ENCODE measurements at regions of chr7 and their contacts with region 1.

Region 1: GRCh38 chr7:81659697-81660395 is 110.0 kb downstream of the HGF start:
- DNase-seq: no peak
- ATAC-seq: no peak
- H3K4me3 Mint-ChIP-seq: no peak overlapping the region
- H3K27ac Mint-ChIP-seq: no peak overlapping the region
- H3K4me1 Mint-ChIP-seq: no peaks in the 10 kb centered on the region
- H3K27me3 Mint-ChIP-seq: no peaks in the 10 kb centered on the region

Region 2: DNA sequence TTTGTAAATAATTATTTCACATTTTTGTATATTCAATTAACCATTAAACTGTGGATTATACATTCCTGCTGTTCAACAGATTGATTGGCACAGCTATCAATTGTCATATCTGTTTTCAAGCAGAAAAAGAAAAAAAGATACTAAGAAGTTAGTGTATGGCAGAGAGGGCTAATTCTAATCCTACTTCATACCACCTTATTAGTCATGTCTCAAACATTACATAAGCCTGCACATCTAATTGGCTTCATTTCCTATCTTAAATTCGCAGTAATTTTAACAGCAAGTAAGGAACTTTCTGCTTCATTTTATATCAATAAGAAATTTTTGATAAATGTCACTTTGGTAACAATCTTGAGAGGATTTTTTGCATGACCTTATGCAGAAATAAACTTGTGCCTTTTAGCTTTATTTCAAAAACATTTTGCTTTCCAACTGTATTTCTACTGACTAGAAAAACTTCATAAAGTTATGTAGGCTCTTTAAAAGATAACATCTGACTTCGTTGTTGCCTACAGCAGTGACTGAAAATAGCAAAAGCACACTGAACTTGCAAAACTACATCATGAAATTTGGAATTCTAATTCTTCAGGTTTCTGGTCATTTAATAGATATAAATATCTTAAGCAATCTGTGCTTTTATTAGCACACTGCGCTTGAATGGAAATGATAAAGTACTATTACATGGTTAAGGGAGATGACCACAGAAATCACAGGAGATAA is 852.5 kb before region 1 on chr7:
- CTCF ChIA-PET with region 1: no interaction called
- POLR2A ChIA-PET with region 1: interaction called, 10 read pairs
- intact Hi-C with region 1: no loop called
- DNase-seq: no peak
- ATAC-seq: no peak
- H3K4me3 Mint-ChIP-seq: no peak overlapping the region
- H3K27ac Mint-ChIP-seq: no peak overlapping the region
- H3K4me1 Mint-ChIP-seq: no peaks in the 10 kb centered on the region
- H3K27me3 Mint-ChIP-seq: no peaks in the 10 kb centered on the region

Region 3: DNA sequence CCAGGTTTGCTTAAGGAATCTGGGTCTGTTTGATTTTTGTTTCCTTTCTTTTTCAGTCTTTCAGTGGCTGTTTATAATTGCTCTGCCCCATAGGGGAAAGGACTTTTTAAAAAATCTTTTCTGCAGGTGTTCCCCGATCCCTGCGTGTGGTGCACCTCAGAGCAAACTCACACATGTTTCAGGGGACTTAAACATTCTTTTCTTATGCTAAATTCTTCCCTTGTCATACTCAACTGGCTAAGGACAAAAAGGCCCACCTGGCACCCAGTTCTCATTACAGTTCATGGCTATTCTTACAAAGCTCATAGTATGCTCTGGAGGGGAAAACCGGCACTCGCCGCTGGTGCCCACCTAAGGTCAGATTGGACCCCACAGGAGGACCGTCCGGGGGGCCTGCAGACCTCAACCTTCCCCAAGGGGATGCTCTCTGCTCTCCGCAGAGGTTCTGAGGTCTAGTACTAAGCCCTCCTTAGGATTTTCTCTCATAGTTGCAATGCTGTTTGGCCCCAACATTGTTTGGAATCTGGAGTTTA is 110.3 kb before region 1 on chr7:
- CTCF ChIA-PET with region 1: no interaction called
- POLR2A ChIA-PET with region 1: no interaction called
- intact Hi-C with region 1: no loop called
- DNase-seq: no peak
- ATAC-seq: no peak
- H3K4me3 Mint-ChIP-seq: no peak overlapping the region
- H3K27ac Mint-ChIP-seq: no peak overlapping the region
- H3K4me1 Mint-ChIP-seq: no peaks in the 10 kb centered on the region
- H3K27me3 Mint-ChIP-seq: no peaks in the 10 kb centered on the region

Region 4: GRCh38 chr7:81583882-81584533 is 75.8 kb before region 1 on chr7:
- CTCF ChIA-PET with region 1: no interaction called
- POLR2A ChIA-PET with region 1: no interaction called
- intact Hi-C with region 1: no loop called
- DNase-seq: no peak
- ATAC-seq: no peak
- H3K4me3 Mint-ChIP-seq: no peak overlapping the region
- H3K27ac Mint-ChIP-seq: no peak overlapping the region
- H3K4me1 Mint-ChIP-seq: no peaks in the 10 kb centered on the region
- H3K27me3 Mint-ChIP-seq: no peaks in the 10 kb centered on the region